MCF 10A (cell line): ENCODE measurements at regions of chr3 and their contacts with region 1.

Region 1: GRCh38 chr3:146326670-146327543 is 76.0 kb upstream of the PLSCR4 start:
- DNase-seq: peak; percentile 75
- H3K4me3 Mint-ChIP-seq: no peak overlapping the region
- H3K27ac Mint-ChIP-seq: no peak overlapping the region
- H3K4me1 Mint-ChIP-seq: no peaks in the 10 kb centered on the region
- H3K27me3 Mint-ChIP-seq: no peaks in the 10 kb centered on the region
- CTCF ChIP-seq: peak; percentile 58

Region 2: DNA sequence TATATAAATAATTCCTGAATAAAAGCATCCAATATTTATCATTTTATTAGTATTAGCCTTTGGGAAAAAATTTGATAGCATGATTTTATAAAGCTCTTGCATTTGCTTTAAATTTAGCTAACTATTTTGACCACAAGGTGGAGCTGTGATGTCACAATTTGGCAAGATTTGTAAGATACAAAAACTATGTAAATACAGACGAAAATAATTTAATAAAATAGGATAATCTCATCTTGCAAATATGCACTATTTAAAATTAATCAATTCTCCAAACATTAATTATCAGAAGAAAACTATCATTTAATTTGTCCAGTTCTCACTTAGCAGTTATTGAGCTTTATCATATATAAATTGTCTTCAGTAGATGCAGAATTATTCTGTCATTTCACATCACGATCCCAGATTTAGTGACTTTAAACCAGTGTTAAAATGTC is 261.3 kb before region 1 on chr3:
- CTCF ChIA-PET with region 1: interaction called, 17 read pairs
- POLR2A ChIA-PET with region 1: interaction called, 4 read pairs
- intact Hi-C with region 1: loop called (anchors 5 kb)
- DNase-seq: peak; percentile 69
- H3K4me3 Mint-ChIP-seq: no peak overlapping the region
- H3K27ac Mint-ChIP-seq: no peak overlapping the region
- H3K4me1 Mint-ChIP-seq: peaks cover 9% of the 10 kb centered on the region
- H3K27me3 Mint-ChIP-seq: no peaks in the 10 kb centered on the region
- CTCF ChIP-seq: peak; percentile 72

Region 3: DNA sequence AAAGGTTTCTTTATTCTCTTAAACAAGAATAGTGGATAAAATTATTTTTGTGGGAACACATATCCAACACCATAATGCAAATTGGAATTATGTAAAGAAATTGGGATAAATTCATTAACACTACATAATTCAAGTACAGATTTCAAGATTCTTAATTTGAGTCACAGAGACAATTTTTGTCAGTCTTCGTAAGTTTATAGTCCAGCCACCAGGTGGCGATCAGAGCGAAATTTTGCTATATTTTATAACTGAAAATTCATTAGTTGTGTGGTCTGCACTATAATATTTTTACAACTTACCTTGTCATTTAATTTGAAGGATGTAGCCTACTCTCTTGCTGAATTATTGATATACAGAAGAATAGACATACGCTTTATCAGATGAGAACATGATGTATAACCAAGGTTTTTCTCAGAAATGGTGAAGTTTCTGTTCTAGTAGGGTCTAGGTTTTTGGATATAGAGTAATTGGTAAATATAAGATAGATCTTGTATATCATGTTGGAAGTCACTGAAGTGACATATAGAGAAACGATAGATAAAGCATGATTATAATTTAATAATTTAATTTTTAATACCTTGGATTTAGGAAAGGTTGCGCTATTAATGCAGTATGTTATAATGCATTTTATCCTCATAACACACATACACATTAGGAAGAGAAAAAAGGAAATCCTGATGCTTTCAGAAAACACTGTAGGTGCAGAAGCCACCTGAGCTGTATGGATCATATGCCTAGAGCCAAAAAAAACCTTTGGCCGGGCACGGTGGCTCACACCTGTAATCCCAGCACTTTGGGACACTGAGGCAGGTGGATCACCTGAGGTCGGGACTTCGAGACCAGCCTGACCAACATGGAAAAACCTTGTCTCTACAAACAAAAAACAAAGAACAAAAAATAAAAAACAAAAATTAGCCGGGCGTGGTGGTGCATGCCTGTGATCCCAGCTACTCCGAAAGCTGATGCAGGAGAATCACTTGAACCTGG is 107.7 kb before region 1 on chr3:
- CTCF ChIA-PET with region 1: interaction called, 116 read pairs
- POLR2A ChIA-PET with region 1: interaction called, 7 read pairs
- intact Hi-C with region 1: loop called (anchors 1 kb)
- DNase-seq: peak; percentile 49
- H3K4me3 Mint-ChIP-seq: no peak overlapping the region
- H3K27ac Mint-ChIP-seq: no peak overlapping the region
- H3K4me1 Mint-ChIP-seq: peaks cover 22% of the 10 kb centered on the region
- H3K27me3 Mint-ChIP-seq: no peaks in the 10 kb centered on the region
- CTCF ChIP-seq: peak; percentile 66

Region 4: DNA sequence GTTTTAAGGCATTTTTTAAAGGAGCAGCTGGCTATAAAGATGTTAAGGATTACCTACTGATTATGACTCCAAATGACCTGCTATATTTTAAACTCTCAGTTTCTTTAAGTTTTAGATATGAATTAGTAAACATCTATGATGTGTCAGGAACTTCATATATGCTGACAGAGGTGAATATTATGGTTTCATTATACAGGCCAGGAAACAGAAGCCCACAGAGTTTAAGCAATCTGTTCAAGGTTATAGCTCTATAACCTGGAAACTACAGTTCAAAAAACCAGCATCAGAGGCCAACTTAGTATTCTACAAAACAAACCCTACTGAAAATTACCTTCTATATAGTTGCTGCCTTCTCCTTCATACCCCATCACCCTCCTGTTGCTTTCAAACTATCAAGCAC is 93.4 kb before region 1 on chr3:
- CTCF ChIA-PET with region 1: interaction called, 14 read pairs
- POLR2A ChIA-PET with region 1: no interaction called
- intact Hi-C with region 1: no loop called
- DNase-seq: no peak
- H3K4me3 Mint-ChIP-seq: no peak overlapping the region
- H3K27ac Mint-ChIP-seq: no peak overlapping the region
- H3K4me1 Mint-ChIP-seq: no peaks in the 10 kb centered on the region
- H3K27me3 Mint-ChIP-seq: no peaks in the 10 kb centered on the region
- CTCF ChIP-seq: no peak

Region 5: DNA sequence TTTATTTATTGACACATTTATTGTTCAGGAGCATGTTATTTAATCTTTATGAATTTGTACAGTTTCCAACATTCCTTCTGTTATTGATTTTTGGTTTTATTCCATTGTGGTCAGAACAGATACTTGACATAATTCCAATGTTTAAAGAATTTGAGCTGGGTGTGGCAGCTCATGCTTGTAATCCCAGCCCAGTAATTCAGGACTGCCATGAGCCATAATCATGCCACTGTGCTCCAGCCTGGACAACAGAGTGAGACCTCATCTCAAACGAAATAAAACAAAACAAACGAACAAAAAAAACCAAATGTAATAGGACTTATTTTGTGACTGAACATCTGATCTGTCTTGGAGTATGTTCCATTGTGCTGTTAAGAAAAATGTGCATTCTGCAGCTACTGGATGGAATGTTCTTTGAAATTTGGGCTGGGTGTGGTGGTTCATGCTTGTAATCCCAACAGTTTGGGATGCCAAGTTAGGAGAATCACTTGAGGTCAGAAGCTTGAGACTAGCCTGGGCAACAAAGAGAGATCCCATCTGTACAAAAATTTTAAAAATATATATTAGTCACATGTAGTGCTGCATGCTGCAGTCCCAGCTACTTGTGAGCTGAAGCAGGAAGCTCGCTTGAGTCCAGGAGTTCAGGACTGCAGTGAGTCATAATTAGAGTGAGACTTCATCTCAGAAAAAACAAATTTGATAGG is 13.3 kb before region 1 on chr3:
- CTCF ChIA-PET with region 1: interaction called, 22 read pairs
- POLR2A ChIA-PET with region 1: interaction called, 3 read pairs
- intact Hi-C with region 1: no loop called
- DNase-seq: peak; percentile 61
- H3K4me3 Mint-ChIP-seq: peak overlapping the region; percentile 47
- H3K27ac Mint-ChIP-seq: peak overlapping the region; percentile 68
- H3K4me1 Mint-ChIP-seq: peaks cover 49% of the 10 kb centered on the region
- H3K27me3 Mint-ChIP-seq: no peaks in the 10 kb centered on the region
- CTCF ChIP-seq: no peak

Region 6: DNA sequence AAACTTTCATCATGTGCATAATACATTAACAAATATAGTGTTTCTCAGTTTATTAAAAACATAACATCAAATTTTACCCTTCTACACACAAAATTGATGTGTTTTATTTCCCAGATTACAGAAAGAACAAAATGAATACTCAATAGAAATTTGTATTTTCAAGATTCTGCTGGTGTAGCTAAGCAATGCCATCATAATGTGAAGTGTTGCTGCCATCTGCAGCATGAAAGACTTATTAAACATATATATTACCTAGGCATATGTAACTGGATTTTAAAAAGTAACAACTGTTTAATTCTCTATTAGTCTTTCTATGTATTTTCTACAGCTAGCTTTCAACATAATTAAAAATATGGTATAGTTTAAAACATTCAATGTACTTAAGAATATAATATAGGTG is 250.8 kb after region 1 on chr3:
- CTCF ChIA-PET with region 1: interaction called, 26 read pairs
- POLR2A ChIA-PET with region 1: no interaction called
- intact Hi-C with region 1: loop called (anchors 2 kb)
- DNase-seq: peak; percentile 60
- H3K4me3 Mint-ChIP-seq: no peak overlapping the region
- H3K27ac Mint-ChIP-seq: no peak overlapping the region
- H3K4me1 Mint-ChIP-seq: peaks cover 15% of the 10 kb centered on the region
- H3K27me3 Mint-ChIP-seq: no peaks in the 10 kb centered on the region
- CTCF ChIP-seq: peak; percentile 49